ENCODE measurements at regions of chr10 and their contacts with region 1.

Region 1: DNA sequence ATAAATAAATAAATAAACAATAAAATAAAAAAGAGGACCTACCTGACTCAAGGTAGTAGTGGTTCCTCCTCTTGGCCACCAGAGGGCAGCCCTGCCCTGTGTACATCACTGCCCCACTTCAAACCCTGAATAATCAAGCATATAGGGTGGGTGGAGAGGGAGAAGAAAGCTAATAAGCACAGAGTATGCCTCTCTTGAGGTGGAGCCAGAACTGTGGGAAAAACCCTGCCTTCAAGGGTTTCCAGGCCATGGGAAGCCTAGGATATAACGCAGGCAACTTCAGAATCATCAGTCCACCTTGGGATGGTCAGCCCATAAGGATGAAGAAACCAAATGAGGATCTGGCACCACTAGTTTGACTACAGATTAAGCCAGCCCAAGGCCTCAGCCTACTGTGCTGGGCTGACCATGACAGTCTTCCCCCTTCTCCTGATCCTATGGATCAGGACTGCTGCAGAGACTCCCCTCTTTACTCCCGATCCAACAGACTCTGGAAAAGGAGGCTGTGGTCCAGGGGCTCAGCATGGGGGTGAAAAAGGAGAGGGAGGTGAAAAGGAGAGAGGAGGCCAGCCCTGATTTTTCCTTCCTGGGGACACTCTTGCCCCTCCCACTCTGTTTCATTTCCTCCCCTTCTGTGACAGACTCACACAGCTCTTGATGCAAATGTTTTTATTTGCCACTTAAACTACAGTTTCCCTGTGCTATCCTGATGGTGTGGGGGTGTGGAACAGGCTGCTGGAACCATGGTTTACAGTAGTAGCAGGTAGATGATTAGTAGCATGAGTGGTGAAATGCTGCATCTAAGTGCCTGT is 10.1 kb downstream of the AVPI1 start:
- DNase-seq: no peak
- ATAC-seq: peak; percentile 56 to 69
- H3K4me3 ChIP-seq: no peak overlapping the region
- H3K27ac ChIP-seq: no peak overlapping the region
- H3K4me1 ChIP-seq: no peaks in the 10 kb centered on the region
- H3K27me3 ChIP-seq: no peaks in the 10 kb centered on the region
- CTCF ChIP-seq: peak; percentile 48 to 90 (median 80)
- POLR2A ChIP-seq: no peak

Region 2: DNA sequence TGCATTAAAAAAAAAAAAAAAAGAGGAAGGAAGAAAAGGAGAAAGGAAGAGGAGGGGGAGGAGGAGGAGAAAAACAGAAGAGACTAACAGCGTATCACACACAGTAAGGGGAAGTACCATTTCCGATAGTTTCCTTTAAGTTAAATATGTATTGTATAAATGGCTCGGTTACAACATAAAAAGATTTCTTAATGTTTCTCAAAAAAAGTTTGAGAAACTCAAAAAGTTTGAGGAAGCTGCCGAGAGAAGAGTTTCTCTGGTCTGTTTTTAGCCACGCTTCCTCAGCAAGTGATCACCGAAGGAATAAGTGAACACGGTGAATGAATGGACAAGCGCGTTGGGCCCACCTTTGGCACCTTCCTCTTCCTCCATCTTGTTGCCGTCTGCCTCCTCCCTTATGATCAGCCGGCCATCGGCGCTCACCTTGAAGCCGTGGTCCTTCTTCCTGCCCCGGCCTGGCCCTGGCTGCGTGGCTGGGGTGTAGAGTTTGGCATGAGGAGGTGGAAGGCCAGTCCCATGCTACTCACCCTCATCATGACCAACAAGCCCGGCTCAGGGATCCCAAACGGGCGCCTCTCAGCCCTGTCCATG is 311.1 kb before region 1 on chr10:
- in situ Hi-C with region 1: no loop called
- intact Hi-C with region 1: no loop called
- DNase-seq: no peak
- ATAC-seq: no peak
- H3K4me3 ChIP-seq: no peak overlapping the region
- H3K27ac ChIP-seq: peak overlapping the region in 1 of 4 donors; percentile 34
- H3K4me1 ChIP-seq: peaks cover 0 to 8% of the 10 kb centered on the region in 2 donors
- H3K27me3 ChIP-seq: no peaks in the 10 kb centered on the region
- CTCF ChIP-seq: no peak
- POLR2A ChIP-seq: no peak

Region 3: DNA sequence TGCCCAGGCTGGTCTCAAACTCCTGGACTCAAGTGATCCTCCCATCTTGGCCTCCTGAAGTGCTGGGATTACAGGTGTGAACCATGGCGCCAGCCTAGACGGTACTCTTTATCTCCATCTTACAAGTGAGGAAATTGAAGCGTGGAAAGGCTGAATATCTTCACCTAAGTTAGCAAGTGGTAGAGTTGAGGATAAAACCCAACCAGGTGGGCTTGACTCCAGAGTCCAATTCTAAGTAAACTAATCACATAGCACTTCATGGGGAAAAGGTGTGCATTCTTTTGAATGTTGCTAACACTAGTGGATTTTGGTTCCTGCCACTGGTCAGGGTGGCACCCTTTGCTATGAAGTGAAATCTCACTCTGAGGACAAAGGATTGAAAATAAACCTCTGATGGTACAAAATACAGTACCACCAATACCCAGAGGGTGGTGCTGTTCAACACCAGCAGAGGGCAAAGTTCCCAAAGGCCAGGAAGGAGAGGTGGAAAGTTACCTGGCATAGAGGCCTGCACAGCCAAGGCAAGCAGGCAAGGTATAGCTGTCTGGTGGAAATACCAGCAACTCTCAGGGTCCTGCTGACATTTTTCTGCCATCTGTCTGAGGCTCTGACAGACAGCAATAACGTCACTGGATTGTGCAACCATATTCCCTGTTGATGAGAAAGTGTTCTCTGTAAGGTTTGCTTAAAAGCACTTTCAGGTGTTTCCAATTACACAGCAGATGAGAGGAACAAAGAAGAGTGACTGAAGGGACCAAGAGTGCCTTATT is 213.4 kb before region 1 on chr10:
- in situ Hi-C with region 1: no loop called
- intact Hi-C with region 1: no loop called
- DNase-seq: peak; percentile 16 to 51
- ATAC-seq: peak; percentile 79 to 81
- H3K4me3 ChIP-seq: no peak overlapping the region
- H3K27ac ChIP-seq: peak overlapping the region; percentile 54 to 64 (median 59)
- H3K4me1 ChIP-seq: peaks cover 5 to 8% of the 10 kb centered on the region in 2 donors
- H3K27me3 ChIP-seq: no peaks in the 10 kb centered on the region
- CTCF ChIP-seq: peak; percentile 83 to 90 (median 86)
- POLR2A ChIP-seq: no peak

Region 4: DNA sequence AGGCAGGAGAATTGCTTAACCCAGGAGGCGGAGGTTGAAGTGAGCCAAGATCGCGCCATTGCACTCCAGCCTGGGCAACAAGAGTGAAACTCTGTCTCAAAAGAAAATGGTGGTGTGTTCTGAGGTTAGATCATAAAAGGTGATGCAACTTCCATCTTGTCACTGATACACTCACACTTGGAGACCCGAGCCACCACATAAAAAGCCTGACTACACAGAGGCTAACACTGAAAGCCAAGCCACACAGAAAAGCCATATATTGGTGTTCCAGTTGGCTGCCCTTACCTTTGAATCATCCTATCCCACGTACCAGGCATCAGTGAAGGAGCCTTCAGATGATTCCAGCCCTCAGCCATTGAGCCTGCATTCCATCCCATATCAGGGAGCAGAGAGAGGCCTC is 47.7 kb before region 1 on chr10:
- in situ Hi-C with region 1: no loop called
- intact Hi-C with region 1: no loop called
- DNase-seq: no peak
- ATAC-seq: no peak
- H3K4me3 ChIP-seq: no peak overlapping the region
- H3K27ac ChIP-seq: no peak overlapping the region
- H3K4me1 ChIP-seq: peaks cover 8% of the 10 kb centered on the region in 2 donors
- H3K27me3 ChIP-seq: no peaks in the 10 kb centered on the region
- CTCF ChIP-seq: no peak
- POLR2A ChIP-seq: no peak

Region 5: DNA sequence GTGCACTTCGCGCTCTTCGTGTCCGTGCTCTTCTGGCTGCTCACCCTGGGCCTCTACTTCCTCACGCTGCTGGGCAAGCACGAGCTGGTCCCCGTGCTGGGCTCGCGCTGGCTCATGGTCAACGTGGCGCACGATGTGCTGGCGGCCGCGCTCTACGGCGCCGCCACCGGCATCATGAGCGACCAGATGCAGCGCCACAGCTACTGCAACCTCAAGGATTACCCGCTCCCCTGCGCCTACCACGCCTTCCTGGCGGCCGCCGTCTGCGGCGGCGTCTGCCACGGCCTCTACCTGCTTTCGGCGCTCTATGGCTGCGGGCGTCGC is 37.0 kb after region 1 on chr10:
- in situ Hi-C with region 1: no loop called
- intact Hi-C with region 1: loop called (anchors 5 kb)
- DNase-seq: peak; percentile 46 to 62
- ATAC-seq: peak; percentile 74 to 79
- H3K4me3 ChIP-seq: peak overlapping the region; percentile 57 to 91 (median 68)
- H3K27ac ChIP-seq: peak overlapping the region; percentile 63 to 85 (median 78)
- H3K4me1 ChIP-seq: peaks cover 13 to 19% of the 10 kb centered on the region in 2 donors
- H3K27me3 ChIP-seq: peaks cover 6 to 13% (median 7%) of the 10 kb centered on the region in 3 donors
- CTCF ChIP-seq: peak in 2 of 5 experiments; percentile 9 to 30
- POLR2A ChIP-seq: peak in 1 of 2 donors; percentile 14

Region 6: DNA sequence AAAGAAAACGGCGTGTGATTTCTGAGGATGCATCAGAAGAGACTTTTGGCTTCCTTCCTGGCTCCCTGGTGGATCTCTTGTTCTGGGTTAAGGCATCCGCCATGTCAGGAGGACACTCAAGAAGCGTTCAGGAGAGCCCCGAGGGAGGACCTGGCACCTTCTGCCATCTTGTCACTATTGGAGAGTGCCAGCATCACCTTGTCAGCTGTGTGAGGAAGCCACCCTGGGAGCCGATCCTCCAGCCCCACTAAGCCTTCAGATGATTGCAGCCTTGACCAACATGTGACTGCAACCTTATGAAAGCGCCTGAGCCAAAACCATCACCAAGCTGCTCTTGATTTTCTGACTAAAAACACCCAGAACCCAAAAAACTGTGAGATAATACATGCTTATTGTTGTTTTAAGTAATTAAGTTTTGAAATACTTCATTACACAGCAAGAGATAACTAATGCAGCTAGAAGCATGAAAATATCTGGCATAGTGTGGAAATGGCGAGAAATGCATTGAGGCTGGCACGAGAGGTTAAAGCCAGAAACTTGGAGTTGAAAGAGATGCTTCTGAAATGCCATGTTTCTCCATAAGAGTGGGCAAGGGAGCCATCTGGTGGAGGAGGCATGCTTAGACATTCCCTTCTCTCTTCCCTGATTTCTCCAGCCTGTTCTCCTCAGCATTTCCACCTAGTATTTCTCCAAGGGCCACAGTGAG is 54.5 kb after region 1 on chr10:
- in situ Hi-C with region 1: loop called in 3 of 4 experiments (anchors 5 to 10 kb)
- intact Hi-C with region 1: loop called (anchors 1 kb)
- DNase-seq: peak in 1 of 2 donors; percentile 48
- ATAC-seq: peak; percentile 54 to 84
- H3K4me3 ChIP-seq: no peak overlapping the region
- H3K27ac ChIP-seq: no peak overlapping the region
- H3K4me1 ChIP-seq: peaks cover 0 to 1% of the 10 kb centered on the region in 2 donors
- H3K27me3 ChIP-seq: no peaks in the 10 kb centered on the region
- CTCF ChIP-seq: peak; percentile 63 to 88 (median 84)
- POLR2A ChIP-seq: no peak

Region 7: GRCh38 chr10:97736902-97737769 is 60.2 kb after region 1 on chr10 and contains the start of gene ZFYVE27:
- in situ Hi-C with region 1: loop called in 3 of 4 experiments (anchors 5 to 10 kb)
- intact Hi-C with region 1: no loop called
- DNase-seq: peak; percentile 89 to 93
- ATAC-seq: peak; percentile 97
- H3K4me3 ChIP-seq: peak within 1 kb of the TSS; percentile 76 to 96 (median 93)
- H3K27ac ChIP-seq: peak within 1 kb of the TSS; percentile 82 to 93 (median 86)
- H3K4me1 ChIP-seq: peaks cover 12 to 19% of the 10 kb centered on the region in 2 donors
- H3K27me3 ChIP-seq: no peaks in the 10 kb centered on the region
- CTCF ChIP-seq: no peak
- POLR2A ChIP-seq: peak; percentile 88 to 95
- total RNA-seq, gene ZFYVE27: 7.6 to 14.9 (median 11.6) TPM

Measured in gastrocnemius medialis (tissue), 4 donors.